Endothelial cell of umbilical vein (primary cell): ENCODE measurements at regions of chr7 and their contacts with region 1.

Region 1: DNA sequence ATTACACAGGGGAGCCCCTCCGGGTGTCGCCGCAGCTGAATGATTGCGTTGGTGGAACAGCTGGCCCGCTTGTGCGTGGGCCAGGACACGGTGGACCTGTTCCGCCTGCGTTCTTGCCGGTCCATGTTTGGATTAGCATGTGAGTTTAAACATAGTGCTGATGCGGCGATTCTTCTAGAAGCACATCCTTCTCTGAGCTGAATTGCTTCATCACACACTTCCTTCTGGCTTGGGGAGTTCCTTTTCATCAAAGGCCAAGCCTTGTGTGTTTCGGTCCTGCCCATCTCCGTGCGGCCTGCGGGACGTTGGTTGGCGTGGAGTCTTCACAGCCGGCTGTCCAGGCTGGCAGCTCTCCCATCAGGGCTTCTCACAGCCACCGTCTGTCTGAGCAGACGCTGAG is 45.5 kb upstream of the SLC29A4 start:
- DNase-seq: no peak
- H3K4me3 ChIP-seq: no peak overlapping the region
- H3K27ac ChIP-seq: no peak overlapping the region
- H3K4me1 ChIP-seq: peaks cover 2% of the 10 kb centered on the region
- H3K27me3 ChIP-seq: no peaks in the 10 kb centered on the region
- CTCF ChIP-seq: no peak
- POLR2A ChIP-seq: no peak

Region 2: GRCh38 chr7:5450549-5451372 is 213.5 kb after region 1 on chr7:
- CTCF ChIA-PET with region 1: interaction called, 69 read pairs
- POLR2A ChIA-PET with region 1: no interaction called
- dilution Hi-C with region 1: no loop called
- intact Hi-C with region 1: loop called (anchors 1 kb)
- DNase-seq: peak; percentile 54
- H3K4me3 ChIP-seq: no peak overlapping the region
- H3K27ac ChIP-seq: no peak overlapping the region
- H3K4me1 ChIP-seq: no peaks in the 10 kb centered on the region
- H3K27me3 ChIP-seq: no peaks in the 10 kb centered on the region
- CTCF ChIP-seq: peak; percentile 50 to 70
- POLR2A ChIP-seq: no peak

Region 3: DNA sequence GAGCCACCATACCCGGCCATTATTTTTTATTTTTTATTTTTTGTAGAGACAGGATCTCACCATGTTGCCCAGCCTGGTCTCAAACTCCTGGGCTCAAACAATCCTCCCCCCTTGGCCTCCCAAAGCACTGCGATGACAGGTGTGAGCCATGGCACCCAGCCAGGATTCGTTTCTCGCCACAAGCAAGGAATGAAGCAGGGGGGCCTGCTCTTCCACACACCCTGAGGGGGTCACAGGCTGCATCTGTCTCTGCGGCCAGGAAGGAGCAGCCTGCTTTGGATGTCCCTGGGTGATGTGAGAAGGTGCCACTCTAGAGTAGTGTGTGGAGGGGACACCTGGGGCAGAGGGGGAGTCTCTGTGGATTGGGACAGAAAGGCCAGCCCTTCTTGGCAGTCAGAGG is 247.6 kb after region 1 on chr7:
- CTCF ChIA-PET with region 1: interaction called, 10 read pairs
- POLR2A ChIA-PET with region 1: no interaction called
- dilution Hi-C with region 1: no loop called
- intact Hi-C with region 1: no loop called
- DNase-seq: no peak
- H3K4me3 ChIP-seq: no peak overlapping the region
- H3K27ac ChIP-seq: no peak overlapping the region
- H3K4me1 ChIP-seq: peaks cover 4% of the 10 kb centered on the region
- H3K27me3 ChIP-seq: no peaks in the 10 kb centered on the region
- CTCF ChIP-seq: no peak
- POLR2A ChIP-seq: no peak

Region 4: GRCh38 chr7:5557920-5558401 is 320.7 kb after region 1 on chr7:
- CTCF ChIA-PET with region 1: interaction called, 9 read pairs
- POLR2A ChIA-PET with region 1: no interaction called
- dilution Hi-C with region 1: no loop called
- intact Hi-C with region 1: loop called (anchors 1 kb)
- DNase-seq: no peak
- H3K4me3 ChIP-seq: no peak overlapping the region
- H3K27ac ChIP-seq: no peak overlapping the region
- H3K4me1 ChIP-seq: peaks cover 20% of the 10 kb centered on the region
- H3K27me3 ChIP-seq: no peaks in the 10 kb centered on the region
- CTCF ChIP-seq: no peak
- POLR2A ChIP-seq: no peak